Breast epithelium (tissue), 4 donors: ENCODE measurements at regions of chr5 and their contacts with region 1.

Region 1: GRCh38 chr5:38563624-38564023 is 7.2 kb upstream of the LIFR start:
- DNase-seq: no peak
- H3K4me3 ChIP-seq: no peak overlapping the region
- H3K27ac ChIP-seq: no peak overlapping the region
- H3K4me1 ChIP-seq: no peaks in the 10 kb centered on the region
- H3K27me3 ChIP-seq: no peaks in the 10 kb centered on the region
- CTCF ChIP-seq: no peak
- POLR2A ChIP-seq: no peak

Region 2: GRCh38 chr5:38483788-38484398 is 79.7 kb before region 1 on chr5:
- intact Hi-C with region 1: no loop called
- DNase-seq: no peak
- H3K4me3 ChIP-seq: no peak overlapping the region
- H3K27ac ChIP-seq: no peak overlapping the region
- H3K4me1 ChIP-seq: no peaks in the 10 kb centered on the region
- H3K27me3 ChIP-seq: no peaks in the 10 kb centered on the region
- CTCF ChIP-seq: no peak
- POLR2A ChIP-seq: no peak

Region 3: GRCh38 chr5:38666668-38667498 is 103.3 kb after region 1 on chr5:
- intact Hi-C with region 1: loop called (anchors 10 kb)
- DNase-seq: no peak
- H3K4me3 ChIP-seq: no peak overlapping the region
- H3K27ac ChIP-seq: no peak overlapping the region
- H3K4me1 ChIP-seq: no peaks in the 10 kb centered on the region
- H3K27me3 ChIP-seq: no peaks in the 10 kb centered on the region
- CTCF ChIP-seq: peak in 2 of 3 donors; percentile 59 to 71
- POLR2A ChIP-seq: no peak